CD8-positive, alpha-beta T cell (primary cell): ENCODE measurements at regions of chr3 and their contacts with region 1.

Region 1: DNA sequence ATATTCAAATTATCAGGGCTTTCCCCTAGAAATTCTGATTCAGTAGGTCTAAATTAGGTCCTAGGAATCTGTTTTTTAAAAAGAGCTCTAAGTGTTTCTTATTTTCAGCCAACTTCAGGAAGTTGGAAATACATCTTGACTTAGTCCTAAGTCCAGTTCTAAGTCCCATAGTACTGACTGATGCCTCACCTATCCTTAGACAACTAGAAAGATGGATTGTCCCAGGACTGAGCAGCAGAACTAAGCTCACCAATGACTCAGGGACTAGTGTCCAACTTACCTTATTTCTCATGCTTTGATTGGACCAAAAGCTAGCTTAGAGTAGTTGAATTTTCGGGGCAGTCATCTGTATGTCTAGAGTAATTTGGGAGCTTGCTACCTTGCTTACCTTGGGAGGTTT is 26.2 kb upstream of the C3orf38 start:
- DNase-seq: no peak
- ATAC-seq: no peak
- H3K4me3 ChIP-seq: no peak overlapping the region
- H3K4me3 Mint-ChIP-seq: no peak overlapping the region
- H3K27ac ChIP-seq: no peak overlapping the region
- H3K27ac Mint-ChIP-seq: no peak overlapping the region
- H3K4me1 ChIP-seq: no peaks in the 10 kb centered on the region
- H3K4me1 Mint-ChIP-seq: peaks cover 13% of the 10 kb centered on the region
- H3K27me3 ChIP-seq: no peaks in the 10 kb centered on the region
- H3K27me3 Mint-ChIP-seq: no peaks in the 10 kb centered on the region
- CTCF ChIP-seq: no peak

Region 2: GRCh38 chr3:88084097-88084501 is 39.4 kb before region 1 on chr3:
- CTCF ChIA-PET with region 1: no interaction called
- POLR2A ChIA-PET with region 1: no interaction called
- intact Hi-C with region 1: loop called in 1 of 2 experiments (anchors 5 kb)
- DNase-seq: no peak
- ATAC-seq: no peak
- H3K4me3 ChIP-seq: no peak overlapping the region
- H3K4me3 Mint-ChIP-seq: no peak overlapping the region
- H3K27ac ChIP-seq: no peak overlapping the region
- H3K27ac Mint-ChIP-seq: no peak overlapping the region
- H3K4me1 ChIP-seq: peaks cover 4% of the 10 kb centered on the region
- H3K4me1 Mint-ChIP-seq: peaks cover 46% of the 10 kb centered on the region
- H3K27me3 ChIP-seq: no peaks in the 10 kb centered on the region
- H3K27me3 Mint-ChIP-seq: no peaks in the 10 kb centered on the region
- CTCF ChIP-seq: no peak

Region 3: GRCh38 chr3:88137836-88138235 is 14.3 kb after region 1 on chr3:
- CTCF ChIA-PET with region 1: no interaction called
- POLR2A ChIA-PET with region 1: interaction called, 3 read pairs
- intact Hi-C with region 1: loop called in 1 of 2 experiments (anchors 2 kb)
- DNase-seq: no peak
- ATAC-seq: no peak
- H3K4me3 ChIP-seq: no peak overlapping the region
- H3K4me3 Mint-ChIP-seq: no peak overlapping the region
- H3K27ac ChIP-seq: no peak overlapping the region
- H3K27ac Mint-ChIP-seq: no peak overlapping the region
- H3K4me1 ChIP-seq: no peaks in the 10 kb centered on the region
- H3K4me1 Mint-ChIP-seq: peaks cover 3% of the 10 kb centered on the region
- H3K27me3 ChIP-seq: no peaks in the 10 kb centered on the region
- H3K27me3 Mint-ChIP-seq: no peaks in the 10 kb centered on the region
- CTCF ChIP-seq: no peak